Common myeloid progenitor, CD34-positive (primary cell): ENCODE measurements at regions of chr7 and their contacts with region 1.

Region 1: DNA sequence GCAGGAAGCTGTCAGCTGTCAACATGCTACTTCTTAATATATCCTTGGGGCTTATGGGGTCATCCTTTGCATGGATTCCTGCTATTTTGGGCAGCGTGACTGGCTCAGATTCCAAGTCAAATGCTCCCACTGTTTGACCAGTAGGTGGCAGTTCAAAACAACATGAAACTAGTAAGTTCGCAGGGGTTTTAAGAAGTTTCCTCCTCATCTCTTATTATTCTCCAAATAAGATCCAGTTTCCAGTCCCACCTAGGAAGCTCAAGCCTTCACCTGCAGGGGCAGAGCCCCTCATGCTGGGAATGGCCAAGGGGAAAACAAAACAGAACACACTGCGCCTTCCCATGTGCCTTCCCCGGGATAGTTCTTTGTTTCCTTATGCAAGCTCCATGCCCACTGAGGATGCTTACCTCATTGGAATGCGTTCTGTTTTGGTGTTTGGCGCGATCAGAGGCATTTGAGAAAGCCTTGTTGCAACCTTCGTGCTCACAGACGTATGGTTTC is 259.8 kb downstream of the GLI3 start:
- DNase-seq: peak; percentile 33 to 63 (median 58)
- H3K4me3 ChIP-seq: no peak overlapping the region
- H3K27ac ChIP-seq: no peak overlapping the region
- H3K4me1 ChIP-seq: no peaks in the 10 kb centered on the region
- H3K27me3 ChIP-seq: peaks cover 0 to 4% (median 0%) of the 10 kb centered on the region in 5 experiments

Region 2: DNA sequence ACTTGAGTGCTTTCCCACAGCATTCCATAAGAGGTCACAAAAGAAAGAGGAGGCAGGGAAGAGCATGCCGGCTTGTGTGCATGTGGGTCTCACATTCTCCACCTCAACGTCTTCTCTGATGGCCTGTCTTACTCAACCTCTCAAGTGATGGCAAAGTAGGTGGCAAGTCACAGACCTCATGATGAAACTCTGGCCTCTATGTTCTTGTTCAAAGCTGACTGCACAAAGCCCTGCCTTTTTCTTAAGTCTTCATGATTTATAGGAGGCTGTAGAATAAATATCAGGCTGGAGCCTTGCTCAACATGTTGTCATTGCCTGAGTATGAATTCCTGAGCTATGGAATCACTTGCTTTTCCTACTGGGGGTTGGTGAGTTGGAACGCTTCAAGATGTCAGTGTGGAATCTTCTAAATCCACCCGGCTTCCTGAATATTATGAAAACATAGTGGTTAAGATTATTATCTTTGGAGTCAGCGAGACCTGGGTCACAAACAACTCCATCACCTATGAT is 60.7 kb before region 1 on chr7:
- CTCF ChIA-PET with region 1: no interaction called
- POLR2A ChIA-PET with region 1: no interaction called
- DNase-seq: no peak
- H3K4me3 ChIP-seq: no peak overlapping the region
- H3K27ac ChIP-seq: no peak overlapping the region
- H3K4me1 ChIP-seq: no peaks in the 10 kb centered on the region
- H3K27me3 ChIP-seq: no peaks in the 10 kb centered on the region

Region 3: DNA sequence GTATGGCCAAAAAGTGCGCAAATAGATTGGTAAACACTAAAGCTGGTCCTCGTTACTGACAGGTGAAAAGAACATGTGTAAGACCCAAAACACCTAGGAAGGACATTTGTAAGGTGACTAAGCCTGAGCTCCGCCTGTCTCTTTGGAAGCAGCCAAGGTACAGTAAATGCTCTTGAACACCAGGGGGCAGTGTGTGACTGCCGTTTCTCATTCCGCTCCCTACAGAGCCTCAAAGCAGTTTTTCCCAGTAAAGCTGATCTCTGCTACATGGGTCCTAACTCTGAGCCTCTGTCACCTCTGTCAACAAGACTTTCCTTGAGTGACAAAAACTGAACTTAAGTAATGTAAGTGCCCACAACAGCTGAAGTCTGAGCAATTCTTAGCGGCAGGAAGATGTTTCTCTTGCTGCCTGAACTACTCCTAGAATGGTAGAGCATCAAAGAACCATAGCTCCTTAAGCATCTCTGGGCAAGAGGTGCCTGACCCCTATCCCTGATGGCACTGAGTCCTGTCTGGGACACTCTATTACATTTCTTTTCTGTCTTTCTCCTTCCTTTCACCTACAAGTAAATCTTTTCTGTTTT is 36.3 kb before region 1 on chr7:
- CTCF ChIA-PET with region 1: interaction called, 164 read pairs
- POLR2A ChIA-PET with region 1: no interaction called
- DNase-seq: peak; percentile 54 to 77 (median 72)
- H3K4me3 ChIP-seq: no peak overlapping the region
- H3K27ac ChIP-seq: no peak overlapping the region
- H3K4me1 ChIP-seq: peaks cover 0 to 14% (median 5%) of the 10 kb centered on the region in 4 experiments
- H3K27me3 ChIP-seq: peaks cover 0 to 11% (median 2%) of the 10 kb centered on the region in 5 experiments

Region 4: DNA sequence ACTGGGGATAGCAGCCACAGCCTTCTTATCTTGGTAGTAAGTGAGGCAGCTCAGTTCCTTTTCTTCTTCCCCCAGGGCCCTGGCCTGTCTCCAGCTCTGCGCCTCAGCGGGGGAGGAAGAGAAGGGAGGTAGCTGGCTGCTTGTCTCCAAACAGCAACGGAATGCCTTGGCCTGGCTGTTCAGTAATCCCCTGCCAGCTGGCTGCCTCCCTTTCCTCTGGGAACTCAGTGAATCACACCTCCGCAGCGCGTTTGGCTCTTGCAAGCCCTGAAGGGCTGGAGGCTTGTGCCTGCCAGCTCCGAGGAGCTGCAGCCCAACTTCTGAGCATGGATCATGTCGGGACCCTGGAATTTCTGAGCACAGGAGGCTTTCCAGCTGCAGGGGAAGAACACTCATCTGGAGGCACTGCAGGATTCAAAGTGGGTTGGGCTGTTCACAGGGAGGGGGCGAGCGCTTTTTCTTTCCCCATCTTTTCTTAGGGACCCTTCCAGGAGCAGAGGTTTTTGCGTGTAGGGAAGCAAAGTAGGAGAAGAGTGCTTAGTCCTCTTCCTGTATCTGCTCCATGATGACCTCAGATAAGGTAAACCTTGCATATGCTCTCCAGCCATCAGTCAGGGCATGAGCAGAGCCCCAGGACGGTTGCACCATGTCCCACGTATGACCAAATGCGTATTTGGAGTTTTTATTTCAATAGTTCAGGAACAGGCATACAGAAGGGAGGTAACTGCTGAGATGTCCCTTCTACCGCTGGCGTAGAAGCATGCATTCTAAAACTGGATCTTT is 21.1 kb before region 1 on chr7:
- CTCF ChIA-PET with region 1: interaction called, 54 read pairs
- POLR2A ChIA-PET with region 1: no interaction called
- DNase-seq: peak; percentile 79 to 92 (median 88)
- H3K4me3 ChIP-seq: peak overlapping the region in 4 of 7 experiments; percentile 11 to 58 (median 26)
- H3K27ac ChIP-seq: no peak overlapping the region
- H3K4me1 ChIP-seq: peaks cover 0 to 31% (median 23%) of the 10 kb centered on the region in 4 experiments
- H3K27me3 ChIP-seq: no peaks in the 10 kb centered on the region

Region 5: GRCh38 chr7:41967156-41967555 is 10.0 kb before region 1 on chr7:
- CTCF ChIA-PET with region 1: interaction called, 40 read pairs
- POLR2A ChIA-PET with region 1: no interaction called
- DNase-seq: peak in 1 of 3 donors; percentile 27
- H3K4me3 ChIP-seq: no peak overlapping the region
- H3K27ac ChIP-seq: no peak overlapping the region
- H3K4me1 ChIP-seq: peaks cover 0 to 6% (median 0%) of the 10 kb centered on the region in 4 experiments
- H3K27me3 ChIP-seq: no peaks in the 10 kb centered on the region

Region 6: GRCh38 chr7:42831006-42831717 is 854.0 kb after region 1 on chr7:
- CTCF ChIA-PET with region 1: interaction called, 23 read pairs
- POLR2A ChIA-PET with region 1: no interaction called
- DNase-seq: no peak
- H3K4me3 ChIP-seq: no peak overlapping the region
- H3K27ac ChIP-seq: no peak overlapping the region
- H3K4me1 ChIP-seq: no peaks in the 10 kb centered on the region
- H3K27me3 ChIP-seq: peaks cover 0 to 7% (median 5%) of the 10 kb centered on the region in 5 experiments

Region 7: GRCh38 chr7:42843205-42843800 is 866.1 kb after region 1 on chr7:
- CTCF ChIA-PET with region 1: interaction called, 10 read pairs
- POLR2A ChIA-PET with region 1: no interaction called
- DNase-seq: peak; percentile 47 to 77 (median 69)
- H3K4me3 ChIP-seq: peak overlapping the region in 3 of 7 experiments; percentile 9 to 48 (median 48)
- H3K27ac ChIP-seq: no peak overlapping the region
- H3K4me1 ChIP-seq: no peaks in the 10 kb centered on the region
- H3K27me3 ChIP-seq: peaks cover 0 to 12% (median 1%) of the 10 kb centered on the region in 5 experiments